Upper lobe of right lung (tissue), 1 donor: ENCODE measurements at regions of chr14 and their contacts with region 1.

Region 1: DNA sequence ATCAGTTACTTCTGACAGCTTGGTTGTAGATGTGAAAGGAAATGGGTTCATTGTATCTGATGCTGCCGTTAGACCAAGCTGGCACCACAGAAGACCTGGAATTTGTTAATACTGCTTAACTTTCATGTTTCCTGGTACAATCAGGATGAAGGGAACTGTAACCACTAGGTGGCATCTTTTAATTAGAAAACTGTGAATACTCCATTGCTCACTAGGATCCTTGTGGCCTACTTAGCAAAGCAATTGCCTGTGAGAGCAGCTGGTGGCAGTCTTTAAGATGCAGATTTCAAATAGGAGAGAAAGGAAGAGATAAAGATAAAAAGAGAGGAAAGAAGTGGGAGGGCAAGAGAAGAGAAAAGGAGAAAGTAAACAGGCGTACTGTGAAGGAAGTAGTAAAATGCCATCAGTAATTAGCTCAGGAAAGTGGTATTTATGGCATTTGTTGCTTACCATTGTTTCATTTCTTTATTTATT is 114.5 kb downstream of the RAD51B start:
- DNase-seq: no peak
- ATAC-seq: peak; percentile 94
- H3K4me3 ChIP-seq: no peak overlapping the region
- H3K27ac ChIP-seq: no peak overlapping the region
- H3K4me1 ChIP-seq: peaks cover 7% of the 10 kb centered on the region
- H3K27me3 ChIP-seq: no peaks in the 10 kb centered on the region
- CTCF ChIP-seq: peak; percentile 80

Region 2: GRCh38 chr14:68824517-68825347 is 890.7 kb after region 1 on chr14:
- intact Hi-C with region 1: loop called (anchors 10 kb)
- DNase-seq: peak; percentile 93
- ATAC-seq: peak; percentile 98
- H3K4me3 ChIP-seq: no peak overlapping the region
- H3K27ac ChIP-seq: no peak overlapping the region
- H3K4me1 ChIP-seq: peaks cover under 1% of the 10 kb centered on the region
- H3K27me3 ChIP-seq: no peaks in the 10 kb centered on the region
- CTCF ChIP-seq: peak; percentile 91